ENCODE measurements at regions of chr3 and their contacts with region 1.

Region 1: GRCh38 chr3:62169906-62170660 is 203.3 kb downstream of the FEZF2 start:
- DNase-seq: peak; percentile 74
- H3K4me3 ChIP-seq: no peak overlapping the region
- H3K27ac ChIP-seq: peak overlapping the region; percentile 95
- H3K4me1 ChIP-seq: peaks cover 21% of the 10 kb centered on the region
- H3K27me3 ChIP-seq: no peaks in the 10 kb centered on the region
- CTCF ChIP-seq: no peak
- POLR2A ChIP-seq: no peak

Region 2: GRCh38 chr3:61997101-61997500 is 173.0 kb before region 1 on chr3:
- CTCF ChIA-PET with region 1: no interaction called
- POLR2A ChIA-PET with region 1: no interaction called
- dilution Hi-C with region 1: no loop called
- intact Hi-C with region 1: no loop called
- DNase-seq: no peak
- H3K4me3 ChIP-seq: no peak overlapping the region
- H3K27ac ChIP-seq: no peak overlapping the region
- H3K4me1 ChIP-seq: no peaks in the 10 kb centered on the region
- H3K27me3 ChIP-seq: no peaks in the 10 kb centered on the region
- CTCF ChIP-seq: no peak
- POLR2A ChIP-seq: no peak

Region 3: GRCh38 chr3:62139936-62140335 is 30.1 kb before region 1 on chr3:
- CTCF ChIA-PET with region 1: interaction called, 6 read pairs
- POLR2A ChIA-PET with region 1: no interaction called
- dilution Hi-C with region 1: no loop called
- intact Hi-C with region 1: loop called (anchors 1 kb)
- DNase-seq: no peak
- H3K4me3 ChIP-seq: no peak overlapping the region
- H3K27ac ChIP-seq: no peak overlapping the region
- H3K4me1 ChIP-seq: peaks cover 14% of the 10 kb centered on the region
- H3K27me3 ChIP-seq: no peaks in the 10 kb centered on the region
- CTCF ChIP-seq: no peak
- POLR2A ChIP-seq: no peak

Measured in endothelial cell of umbilical vein (primary cell).